Activated T-helper 2 cell treated with anti-CD3 and anti-CD28 coated beads, Interferon-gamma antibody, Interleukin-2, Interleukin-4, amounts not matched to agents 10 μg/mL and 5 μg/mL and 100 μg/mL, durations not matched to agents 14 hours and 24 hours and 36 hours (primary cell): ENCODE measurements at regions of chrX and their contacts with region 1.

Region 1: DNA sequence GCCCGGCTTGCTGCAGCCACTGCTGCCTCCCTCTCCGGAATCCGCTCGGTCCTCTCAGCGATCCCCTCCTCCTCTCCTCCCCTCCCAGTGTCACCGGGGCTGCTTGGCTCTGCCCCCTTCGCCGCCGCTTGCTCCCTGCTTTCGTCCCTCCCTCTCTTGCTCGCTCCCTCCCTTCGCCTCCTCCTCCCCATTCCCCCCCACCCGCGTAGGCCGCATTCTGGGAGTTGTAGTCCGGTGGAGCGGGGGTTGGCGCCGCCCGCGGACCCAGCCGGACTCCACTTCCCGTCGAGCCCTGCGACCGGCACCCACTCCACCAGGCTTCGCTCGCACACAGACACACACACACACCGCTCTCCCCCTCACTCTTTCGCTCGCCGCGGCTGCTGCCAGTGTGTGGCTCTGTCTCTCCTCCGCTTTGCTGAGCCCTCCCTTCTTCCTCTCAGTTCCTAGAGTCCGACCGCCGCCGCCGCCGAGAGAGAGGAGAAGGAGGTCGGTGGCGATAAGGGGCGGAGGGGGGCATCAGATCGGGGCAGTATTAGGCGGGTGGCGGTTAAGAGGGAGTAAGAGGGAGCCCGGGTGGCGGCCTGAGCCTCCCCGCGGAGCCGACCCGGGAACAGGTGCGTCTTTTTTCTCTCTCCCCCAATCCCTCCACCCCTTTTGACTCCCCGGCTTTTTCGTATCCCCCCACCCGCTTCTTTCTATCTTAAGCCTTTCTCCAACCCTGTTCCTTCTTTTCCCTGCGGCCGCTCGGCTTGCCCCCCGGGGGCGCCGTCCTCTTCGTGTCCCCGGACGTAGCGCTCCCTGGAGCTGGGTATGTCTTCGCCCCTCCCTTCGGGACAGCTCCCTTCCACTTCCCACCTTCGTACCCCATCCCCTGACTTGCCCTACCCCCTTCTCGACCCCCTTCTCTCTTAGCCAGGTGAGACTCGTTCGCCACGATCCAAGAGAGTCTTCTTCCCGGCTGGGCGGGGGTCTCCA is at the start of gene BCORL1:
- DNase-seq: peak; percentile 83
- H3K4me3 Mint-ChIP-seq: no peak within 1 kb of the TSS
- H3K27ac Mint-ChIP-seq: no peak within 1 kb of the TSS
- H3K4me1 Mint-ChIP-seq: peaks cover 14% of the 10 kb centered on the region
- H3K27me3 Mint-ChIP-seq: peaks cover 16% of the 10 kb centered on the region
- total RNA-seq, gene BCORL1: 14.9 and 16.2 TPM in 2 replicates

Region 2: GRCh38 chrX:129905787-129906580 is 76.6 kb before region 1 on chrX and contains the start of gene UTP14A:
- intact Hi-C with region 1: loop called (anchors 1 kb)
- DNase-seq: peak; percentile 83
- H3K4me3 Mint-ChIP-seq: peak within 1 kb of the TSS; percentile 90
- H3K27ac Mint-ChIP-seq: peak within 1 kb of the TSS; percentile 86
- H3K4me1 Mint-ChIP-seq: peaks cover 14% of the 10 kb centered on the region
- H3K27me3 Mint-ChIP-seq: no peaks in the 10 kb centered on the region
- total RNA-seq, gene UTP14A: 46.6 and 49.9 TPM in 2 replicates

Region 3: GRCh38 chrX:129931411-129932015 is 51.0 kb before region 1 on chrX:
- intact Hi-C with region 1: loop called (anchors 1 kb)
- DNase-seq: peak; percentile 63
- H3K4me3 Mint-ChIP-seq: peak overlapping the region; percentile 85
- H3K27ac Mint-ChIP-seq: peak overlapping the region; percentile 84
- H3K4me1 Mint-ChIP-seq: peaks cover 3% of the 10 kb centered on the region
- H3K27me3 Mint-ChIP-seq: peaks cover 12% of the 10 kb centered on the region

Region 4: DNA sequence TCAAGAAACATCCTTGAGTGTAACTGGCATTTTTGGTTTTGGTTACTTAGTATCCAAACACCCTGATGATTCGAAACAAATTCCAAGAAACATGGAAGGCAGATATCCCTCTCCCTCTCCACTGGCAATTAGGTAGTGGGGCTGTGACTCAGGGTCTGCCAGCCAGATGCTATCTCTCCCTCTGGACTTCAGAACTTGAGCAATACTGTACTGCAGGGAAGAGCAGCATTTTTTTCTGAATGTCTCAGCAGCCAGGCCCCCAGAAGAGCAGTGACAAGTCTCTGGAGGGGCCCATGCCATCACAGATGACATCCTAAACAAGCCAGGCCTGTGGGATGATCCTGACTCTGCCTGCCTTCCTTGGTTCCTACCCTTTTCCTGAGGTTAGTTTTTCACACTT is 37.4 kb before region 1 on chrX:
- intact Hi-C with region 1: no loop called
- DNase-seq: no peak
- H3K4me3 Mint-ChIP-seq: no peak overlapping the region
- H3K27ac Mint-ChIP-seq: no peak overlapping the region
- H3K4me1 Mint-ChIP-seq: no peaks in the 10 kb centered on the region
- H3K27me3 Mint-ChIP-seq: peaks cover 11% of the 10 kb centered on the region

Region 5: DNA sequence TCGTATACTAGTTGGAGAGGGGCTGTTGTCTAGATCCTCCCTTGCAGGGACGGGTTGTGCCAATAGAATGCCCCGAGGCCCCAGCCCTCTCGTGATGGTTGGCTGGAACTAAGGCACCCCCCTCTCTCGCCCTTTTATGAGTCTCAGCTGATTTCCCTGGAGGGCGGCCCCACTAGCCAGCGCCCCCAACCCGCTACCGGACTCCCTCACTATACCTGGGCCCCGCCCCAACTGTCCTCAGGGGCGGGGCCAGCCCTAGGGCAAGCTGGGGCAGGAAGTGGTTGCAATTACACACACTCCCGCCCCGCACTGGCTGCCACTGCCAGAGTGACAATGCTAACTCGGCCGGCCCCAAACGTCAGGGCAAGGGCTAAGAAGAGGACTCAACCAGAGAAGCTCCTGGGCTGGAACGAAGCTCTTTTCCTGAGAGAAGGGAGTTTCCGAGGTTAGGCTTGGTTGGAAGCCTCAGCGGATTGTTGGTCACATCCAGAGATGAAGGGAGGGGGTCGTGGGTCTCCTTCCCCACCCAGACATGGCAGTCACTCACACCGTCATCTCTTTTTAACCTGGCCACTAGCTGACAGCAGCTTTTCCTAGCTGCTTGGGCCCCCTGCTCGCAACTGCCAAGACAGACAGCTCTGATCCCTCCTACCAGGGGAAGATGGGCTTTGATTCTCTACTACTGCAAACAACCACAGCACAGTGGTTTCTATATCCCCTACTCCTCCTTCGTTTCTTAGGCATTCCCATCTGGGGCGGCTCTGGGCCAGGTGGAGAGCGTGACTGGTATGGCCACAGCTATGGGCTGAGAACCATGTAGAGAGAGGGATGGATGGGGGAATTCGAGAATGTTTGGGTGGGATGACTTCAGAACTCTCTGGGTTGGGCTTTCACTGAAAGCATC is 21.1 kb before region 1 on chrX:
- intact Hi-C with region 1: loop called (anchors 2 kb)
- DNase-seq: peak; percentile 70
- H3K4me3 Mint-ChIP-seq: peak overlapping the region; percentile 56
- H3K27ac Mint-ChIP-seq: peak overlapping the region; percentile 89
- H3K4me1 Mint-ChIP-seq: peaks cover 17% of the 10 kb centered on the region
- H3K27me3 Mint-ChIP-seq: peaks cover 1% of the 10 kb centered on the region

Region 6: GRCh38 chrX:130024127-130024526 is 41.6 kb after region 1 on chrX:
- intact Hi-C with region 1: loop called (anchors 5 kb)
- DNase-seq: peak; percentile 78
- H3K4me3 Mint-ChIP-seq: peak overlapping the region; percentile 37
- H3K27ac Mint-ChIP-seq: no peak overlapping the region
- H3K4me1 Mint-ChIP-seq: peaks cover 8% of the 10 kb centered on the region
- H3K27me3 Mint-ChIP-seq: no peaks in the 10 kb centered on the region

Region 7: GRCh38 chrX:130060122-130061069 is 77.8 kb after region 1 on chrX:
- intact Hi-C with region 1: no loop called
- DNase-seq: peak; percentile 73
- H3K4me3 Mint-ChIP-seq: peak overlapping the region; percentile 76
- H3K27ac Mint-ChIP-seq: peak overlapping the region; percentile 80
- H3K4me1 Mint-ChIP-seq: peaks cover 3% of the 10 kb centered on the region
- H3K27me3 Mint-ChIP-seq: no peaks in the 10 kb centered on the region